ENCODE measurements at regions of chr2 and their contacts with region 1.

Region 1: GRCh38 chr2:12293874-12294273 is 422.9 kb upstream of the TRIB2 start:
- DNase-seq: no peak
- H3K4me3 Mint-ChIP-seq: no peak overlapping the region
- H3K27ac Mint-ChIP-seq: no peak overlapping the region
- H3K4me1 Mint-ChIP-seq: peaks cover 43% of the 10 kb centered on the region
- H3K27me3 Mint-ChIP-seq: peaks cover 20% of the 10 kb centered on the region

Region 2: DNA sequence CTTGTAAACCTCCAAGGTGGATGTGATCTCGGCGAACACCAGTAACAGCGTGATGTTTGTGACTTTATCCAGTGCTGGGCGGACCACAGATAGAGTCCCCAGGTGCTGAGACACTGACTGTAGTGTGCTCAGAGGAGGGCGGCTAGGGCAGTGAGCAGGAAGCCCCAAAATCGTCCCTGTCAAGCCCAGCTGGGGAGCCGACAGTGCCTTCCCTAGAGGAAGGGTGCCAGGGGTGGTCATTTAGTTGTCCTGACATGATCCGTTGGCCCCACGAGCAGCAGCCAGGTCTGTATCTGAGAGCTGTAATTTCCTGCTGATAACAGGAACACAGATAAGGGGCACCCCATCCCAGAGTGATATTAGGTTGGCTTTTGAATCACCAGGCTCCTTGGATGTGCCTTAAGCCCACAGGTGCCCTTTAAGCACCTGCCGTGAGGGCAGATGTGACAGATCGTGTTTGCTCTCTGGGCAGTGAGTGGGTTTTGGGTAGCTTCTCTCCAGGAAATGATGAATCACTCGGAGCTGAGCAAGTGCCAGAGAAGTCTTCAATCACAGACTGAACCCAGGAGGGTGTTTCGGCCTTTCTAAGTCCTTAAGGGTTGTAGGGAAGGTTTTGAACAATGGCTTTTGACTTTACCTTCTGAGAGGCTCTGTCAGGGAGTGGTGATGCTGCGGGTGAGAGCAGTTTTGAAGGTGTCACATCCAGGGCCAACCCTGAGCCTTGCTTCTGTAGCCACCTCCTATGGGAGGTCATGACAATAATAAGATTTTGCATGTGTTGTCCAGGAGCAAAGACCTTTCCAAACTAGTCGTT is 539.8 kb before region 1 on chr2:
- CTCF ChIA-PET with region 1: no interaction called
- POLR2A ChIA-PET with region 1: no interaction called
- intact Hi-C with region 1: loop called (anchors 10 kb)
- DNase-seq: peak; percentile 87
- H3K4me3 Mint-ChIP-seq: peak overlapping the region; percentile 72
- H3K27ac Mint-ChIP-seq: peak overlapping the region; percentile 97
- H3K4me1 Mint-ChIP-seq: peaks cover 90% of the 10 kb centered on the region
- H3K27me3 Mint-ChIP-seq: no peaks in the 10 kb centered on the region

Region 3: GRCh38 chr2:11945139-11946126 is 348.4 kb before region 1 on chr2:
- CTCF ChIA-PET with region 1: no interaction called
- POLR2A ChIA-PET with region 1: no interaction called
- intact Hi-C with region 1: loop called (anchors 2 kb)
- DNase-seq: peak; percentile 54
- H3K4me3 Mint-ChIP-seq: no peak overlapping the region
- H3K27ac Mint-ChIP-seq: no peak overlapping the region
- H3K4me1 Mint-ChIP-seq: peaks cover 12% of the 10 kb centered on the region
- H3K27me3 Mint-ChIP-seq: no peaks in the 10 kb centered on the region

Region 4: GRCh38 chr2:12270876-12271588 is 22.8 kb before region 1 on chr2:
- CTCF ChIA-PET with region 1: interaction called, 9 read pairs
- POLR2A ChIA-PET with region 1: interaction called, 13 read pairs
- intact Hi-C with region 1: loop called (anchors 1 kb)
- DNase-seq: peak; percentile 63
- H3K4me3 Mint-ChIP-seq: no peak overlapping the region
- H3K27ac Mint-ChIP-seq: no peak overlapping the region
- H3K4me1 Mint-ChIP-seq: peaks cover 12% of the 10 kb centered on the region
- H3K27me3 Mint-ChIP-seq: no peaks in the 10 kb centered on the region

Region 5: DNA sequence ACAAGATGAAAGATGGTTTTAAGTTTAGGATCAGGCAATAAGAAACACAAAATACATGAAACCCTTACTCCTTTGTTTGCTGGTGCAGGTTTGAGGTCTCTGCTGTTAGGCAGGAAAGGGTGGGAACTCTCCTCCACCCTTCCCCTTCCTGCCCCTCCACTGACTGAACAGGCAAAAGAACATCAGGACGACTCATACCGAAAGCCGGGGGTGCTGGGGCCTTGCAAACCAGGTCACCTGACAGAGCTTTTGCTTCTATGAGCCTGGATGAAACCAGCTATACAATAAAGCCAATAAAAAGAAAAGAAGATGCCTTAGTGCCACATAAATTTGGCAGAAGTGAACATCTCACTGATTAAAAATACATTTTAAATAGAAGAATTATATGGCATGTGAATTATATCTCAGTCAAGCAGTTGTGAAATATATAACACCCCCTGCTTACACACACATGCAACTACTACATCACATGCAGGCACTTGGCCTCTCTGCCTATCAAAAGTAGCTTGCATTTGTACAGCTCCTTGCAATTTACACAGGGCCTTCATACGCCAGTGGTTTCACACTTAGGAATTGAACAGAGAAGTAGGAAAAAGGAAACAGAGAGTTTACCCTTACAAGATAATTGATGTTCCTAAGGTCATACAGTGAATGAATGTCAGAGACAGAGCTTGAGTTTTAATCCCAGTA is 207.7 kb after region 1 on chr2:
- CTCF ChIA-PET with region 1: no interaction called
- POLR2A ChIA-PET with region 1: no interaction called
- intact Hi-C with region 1: loop called (anchors 5 kb)
- DNase-seq: peak; percentile 89
- H3K4me3 Mint-ChIP-seq: peak overlapping the region; percentile 17
- H3K27ac Mint-ChIP-seq: peak overlapping the region; percentile 71
- H3K4me1 Mint-ChIP-seq: peaks cover 92% of the 10 kb centered on the region
- H3K27me3 Mint-ChIP-seq: no peaks in the 10 kb centered on the region

Region 6: GRCh38 chr2:12965540-12966269 is 671.8 kb after region 1 on chr2:
- CTCF ChIA-PET with region 1: no interaction called
- POLR2A ChIA-PET with region 1: no interaction called
- intact Hi-C with region 1: loop called (anchors 10 kb)
- DNase-seq: no peak
- H3K4me3 Mint-ChIP-seq: no peak overlapping the region
- H3K27ac Mint-ChIP-seq: no peak overlapping the region
- H3K4me1 Mint-ChIP-seq: peaks cover 19% of the 10 kb centered on the region
- H3K27me3 Mint-ChIP-seq: peaks cover 2% of the 10 kb centered on the region

Measured in activated CD4-positive, alpha-beta memory T cell treated with anti-CD3 and anti-CD28 coated beads for 36 hours (primary cell).